ENCODE measurements at regions of chr11 and their contacts with region 1.

Region 1: DNA sequence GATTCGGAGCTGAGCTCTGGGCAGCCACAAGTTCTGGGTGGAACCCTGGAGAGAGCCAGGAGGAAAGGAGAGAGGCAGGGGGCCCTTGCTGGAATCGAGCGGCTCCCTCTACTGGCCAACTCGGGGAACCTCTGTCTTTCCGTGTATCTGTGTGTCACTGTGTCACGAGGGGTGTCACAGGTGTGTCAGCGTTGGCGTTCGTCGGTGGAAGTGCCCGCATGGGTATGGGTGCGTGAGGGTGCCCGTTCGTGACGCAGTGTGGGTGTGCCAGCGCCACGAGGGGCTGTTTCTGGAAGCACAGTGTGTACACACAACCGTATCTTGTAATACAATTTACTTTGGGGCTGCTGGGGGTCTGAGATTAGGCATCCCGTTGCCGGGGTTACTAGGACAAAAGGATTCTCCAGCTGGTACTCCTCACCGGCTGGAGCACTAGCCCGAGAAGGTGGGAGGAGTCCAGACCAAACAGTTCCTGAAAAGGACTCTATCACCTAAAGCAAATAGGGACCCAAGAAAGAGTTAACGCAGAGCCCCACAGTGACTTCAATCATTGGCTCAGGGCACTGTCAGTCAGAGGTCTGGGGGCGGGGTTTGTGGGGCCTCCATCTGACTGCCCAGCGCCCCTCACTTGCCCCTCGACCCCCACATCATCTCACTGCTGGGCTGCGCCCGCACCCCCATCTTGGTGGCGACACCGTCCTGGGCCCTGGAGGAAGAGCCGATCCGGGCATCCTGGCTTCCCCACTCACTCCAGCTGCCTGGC is 2.6 kb upstream of the BCL9L start:
- DNase-seq: peak; percentile 85
- H3K4me3 Mint-ChIP-seq: peak overlapping the region; percentile 93
- H3K27ac Mint-ChIP-seq: peak overlapping the region; percentile 95
- H3K4me1 Mint-ChIP-seq: peaks cover 53% of the 10 kb centered on the region
- H3K27me3 Mint-ChIP-seq: peaks cover 3% of the 10 kb centered on the region

Region 2: GRCh38 chr11:118572061-118572980 is 356.0 kb before region 1 on chr11 and contains the start of gene ARCN1:
- intact Hi-C with region 1: loop called (anchors 2 kb)
- DNase-seq: peak; percentile 69
- H3K4me3 Mint-ChIP-seq: peak within 1 kb of the TSS; percentile 98
- H3K27ac Mint-ChIP-seq: peak within 1 kb of the TSS; percentile 96
- H3K4me1 Mint-ChIP-seq: peaks cover 51% of the 10 kb centered on the region
- H3K27me3 Mint-ChIP-seq: no peaks in the 10 kb centered on the region
- total RNA-seq, gene ARCN1: 162 and 165 TPM in 2 replicates

Region 3: DNA sequence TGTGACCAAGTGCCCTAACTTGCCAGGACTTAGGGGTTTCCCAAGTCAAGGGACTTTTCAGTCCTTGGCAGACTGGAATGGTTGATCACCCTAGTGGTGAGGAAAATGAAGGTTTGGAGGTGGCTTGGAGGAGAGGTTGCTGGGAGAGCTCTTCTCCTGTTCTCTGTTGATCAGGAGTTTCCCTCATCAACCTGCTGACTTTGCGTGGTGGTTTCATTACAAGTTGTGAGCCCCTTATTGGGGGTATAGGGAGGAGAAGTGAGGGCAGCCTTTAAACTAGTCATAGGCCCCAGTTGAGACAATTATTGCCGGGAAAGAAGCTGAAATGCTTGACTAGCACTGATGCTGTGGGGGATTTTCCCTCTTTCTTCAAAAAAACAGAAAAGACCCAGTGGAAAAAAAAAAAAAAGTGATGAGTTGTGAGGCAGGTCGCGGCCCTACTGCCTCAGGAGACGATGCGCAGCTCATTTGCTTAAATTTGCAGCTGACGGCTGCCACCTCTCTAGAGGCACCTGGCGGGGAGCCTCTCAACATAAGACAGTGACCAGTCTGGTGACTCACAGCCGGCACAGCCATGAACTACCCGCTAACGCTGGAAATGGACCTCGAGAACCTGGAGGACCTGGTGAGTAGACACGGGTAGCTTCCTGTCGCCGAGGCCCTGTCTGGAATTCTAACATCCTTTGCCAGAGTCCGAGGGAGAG is 44.8 kb before region 1 on chr11 and contains the start of gene CXCR5:
- intact Hi-C with region 1: loop called (anchors 2 kb)
- DNase-seq: no peak
- H3K4me3 Mint-ChIP-seq: peak within 1 kb of the TSS; percentile 52
- H3K27ac Mint-ChIP-seq: peak within 1 kb of the TSS; percentile 87
- H3K4me1 Mint-ChIP-seq: peaks cover 50% of the 10 kb centered on the region
- H3K27me3 Mint-ChIP-seq: no peaks in the 10 kb centered on the region
- total RNA-seq, gene CXCR5: 5.1 and 5.5 TPM in 2 replicates

Region 4: DNA sequence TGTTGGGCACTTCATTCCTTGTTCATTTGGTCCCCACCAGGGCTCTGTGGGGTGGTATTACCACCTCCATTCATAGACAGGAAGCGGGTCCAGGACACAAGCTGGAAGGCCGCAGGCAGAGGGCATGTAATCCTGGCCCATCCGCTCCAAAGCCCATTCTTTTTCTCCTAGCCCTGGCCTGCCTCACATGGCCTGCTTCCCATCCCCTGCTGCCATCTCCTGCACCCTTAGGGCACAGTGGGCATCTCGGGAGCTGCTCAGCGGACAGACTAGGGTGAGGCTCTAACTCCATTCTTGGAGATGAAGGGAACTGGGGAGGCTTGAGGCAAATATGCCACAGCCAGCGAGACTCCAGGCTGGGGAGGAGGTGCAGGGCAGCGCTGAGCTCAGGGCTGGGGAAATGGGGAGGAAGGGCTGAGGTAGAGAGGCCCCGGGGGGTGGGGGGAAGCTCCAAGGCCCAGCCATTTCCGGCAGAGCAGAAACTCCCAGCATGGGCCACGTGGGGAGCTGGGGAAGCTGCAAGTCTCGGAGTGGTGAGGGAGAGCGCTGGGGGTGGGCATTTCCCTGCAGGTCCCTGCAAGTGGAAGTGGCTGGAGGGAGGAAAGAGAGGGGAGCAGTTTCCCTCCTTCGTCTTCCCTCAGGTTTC is 11.8 kb after region 1 on chr11:
- intact Hi-C with region 1: loop called (anchors 1 kb)
- DNase-seq: no peak
- H3K4me3 Mint-ChIP-seq: no peak overlapping the region
- H3K27ac Mint-ChIP-seq: peak overlapping the region; percentile 61
- H3K4me1 Mint-ChIP-seq: peaks cover 24% of the 10 kb centered on the region
- H3K27me3 Mint-ChIP-seq: peaks cover 5% of the 10 kb centered on the region

Region 5: DNA sequence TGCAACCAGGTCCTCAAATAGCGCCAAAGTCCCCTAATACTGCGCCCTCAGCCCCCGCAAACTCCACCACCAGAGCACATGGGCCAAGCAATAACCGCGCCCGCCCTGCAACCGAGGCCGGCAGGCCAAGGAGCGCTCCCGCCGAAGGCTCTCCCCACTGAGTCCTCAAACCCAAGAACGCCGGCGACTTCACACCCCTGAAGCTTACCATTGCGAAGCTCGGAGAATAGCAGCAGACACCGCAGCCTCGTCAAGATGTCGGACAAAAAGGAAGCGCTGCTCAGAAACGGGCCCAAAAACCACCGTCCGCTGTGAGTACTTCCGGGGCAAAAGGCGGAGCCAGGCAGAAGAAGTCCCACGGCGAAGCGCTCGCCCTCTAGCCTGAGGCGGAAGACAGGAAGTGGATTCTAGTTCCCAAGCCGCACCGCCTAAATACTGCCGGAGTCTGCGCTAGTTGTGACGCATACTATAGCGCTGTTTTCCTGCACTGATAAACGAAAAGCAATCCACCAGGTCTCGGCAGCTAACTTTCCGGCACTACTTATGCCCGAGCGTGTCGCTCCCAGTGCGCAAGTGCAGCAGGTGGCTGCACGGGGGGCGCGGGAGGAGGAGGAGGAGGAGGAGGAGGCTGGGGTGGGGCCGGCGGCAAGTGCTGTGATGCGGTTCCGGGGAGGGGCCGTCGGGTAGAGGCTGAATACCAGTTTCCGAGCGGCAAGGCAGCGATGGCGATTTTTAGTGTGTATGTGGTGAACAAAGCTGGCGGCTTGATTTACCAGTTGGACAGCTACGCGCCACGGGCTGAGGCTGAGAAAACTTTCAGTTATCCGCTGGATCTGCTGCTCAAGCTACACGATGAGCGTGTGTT is 90.0 kb after region 1 on chr11 and contains the starts of genes RPS25 and TRAPPC4:
- intact Hi-C with region 1: loop called (anchors 2 kb)
- DNase-seq: peak; percentile 92
- H3K4me3 Mint-ChIP-seq: peak within 1 kb of the TSS; percentile 99
- H3K27ac Mint-ChIP-seq: peak within 1 kb of the TSS; percentile 100
- H3K4me1 Mint-ChIP-seq: peaks cover 42% of the 10 kb centered on the region
- H3K27me3 Mint-ChIP-seq: no peaks in the 10 kb centered on the region
- total RNA-seq, gene RPS25: 1,440 and 1,455 TPM in 2 replicates
- total RNA-seq, gene TRAPPC4: 141 and 142 TPM in 2 replicates

Region 6: GRCh38 chr11:119101759-119102423 is 173.6 kb after region 1 on chr11 and contains the start of gene DPAGT1:
- intact Hi-C with region 1: loop called (anchors 1 kb)
- DNase-seq: peak; percentile 82
- H3K4me3 Mint-ChIP-seq: peak within 1 kb of the TSS; percentile 91
- H3K27ac Mint-ChIP-seq: peak within 1 kb of the TSS; percentile 95
- H3K4me1 Mint-ChIP-seq: peaks cover 44% of the 10 kb centered on the region
- H3K27me3 Mint-ChIP-seq: no peaks in the 10 kb centered on the region
- total RNA-seq, gene DPAGT1: 81.8 and 84.4 TPM in 2 replicates